HEK293 (cell line): ENCODE measurements at regions of chr20 and their contacts with region 1.

Region 1: DNA sequence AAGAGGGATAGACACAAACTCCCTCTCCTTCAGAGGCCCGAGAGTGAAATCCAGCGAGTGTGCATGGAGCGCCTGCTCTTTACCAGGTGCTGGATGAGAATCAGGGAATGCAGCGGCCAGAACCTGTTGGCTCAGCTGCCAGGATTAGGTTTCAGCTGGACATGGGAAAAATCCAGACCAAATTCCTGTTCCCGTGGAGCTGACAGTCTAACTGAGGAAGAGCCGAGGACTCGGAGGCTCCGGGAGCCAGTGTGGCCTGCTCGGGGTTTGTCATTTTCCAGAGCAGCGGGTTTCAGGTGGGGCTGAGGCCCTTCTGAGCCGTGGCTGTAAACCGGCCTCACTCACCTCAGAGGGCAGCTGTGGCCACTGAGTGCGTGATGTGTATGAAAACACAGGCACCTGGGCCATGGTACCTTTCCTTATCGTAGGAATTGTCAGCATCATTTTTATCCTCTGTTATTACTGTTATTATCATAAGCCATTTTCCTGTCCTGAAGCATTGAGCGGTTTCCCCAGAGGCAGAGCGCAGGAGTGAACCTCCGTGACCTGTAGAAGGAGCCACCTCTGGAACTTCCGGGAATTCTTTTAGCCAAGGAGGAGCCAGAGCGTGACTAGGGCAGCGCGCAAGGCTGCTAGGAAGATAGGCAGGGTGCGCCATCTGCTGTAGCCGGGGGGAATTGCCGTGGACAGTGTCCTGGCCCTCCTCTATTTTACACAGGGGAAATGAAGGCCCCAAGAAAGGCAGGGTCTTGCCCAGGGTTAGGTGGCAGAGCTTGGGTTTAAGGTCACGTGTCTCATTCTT is 27.3 kb downstream of the PKIG start:
- H3K4me3 ChIP-seq: no peak overlapping the region
- H3K27ac ChIP-seq: no peak overlapping the region
- H3K4me1 ChIP-seq: no peaks in the 10 kb centered on the region
- CTCF ChIP-seq: peak; percentile 97

Region 2: DNA sequence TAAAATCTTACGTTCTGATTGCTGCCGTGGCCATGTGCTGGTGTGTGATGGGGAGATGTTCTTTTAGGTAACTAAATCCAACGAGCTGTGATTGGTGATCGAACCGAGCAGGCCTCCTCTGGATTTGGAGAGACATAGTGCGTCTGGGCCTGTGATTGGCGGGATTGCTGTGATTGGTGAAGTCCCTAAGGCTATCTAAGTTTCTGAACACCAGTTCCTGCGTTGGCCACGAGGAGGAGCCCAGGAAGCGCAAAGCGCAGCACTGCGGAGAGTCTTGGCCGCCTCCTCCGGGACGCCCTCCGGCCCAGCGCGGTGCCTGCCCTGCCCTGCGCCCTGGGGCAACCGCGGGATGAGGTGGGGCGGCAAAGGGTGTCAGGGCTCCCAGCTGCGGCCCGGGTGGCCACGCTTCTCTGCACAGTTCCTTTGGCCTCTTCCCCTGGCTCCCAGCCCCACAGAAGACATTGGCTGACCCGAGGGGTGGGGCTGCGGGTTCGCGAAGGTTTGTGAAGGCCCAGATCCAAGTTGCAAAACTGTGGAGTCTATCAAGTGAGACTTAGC is 221.2 kb before region 1 on chr20:
- CTCF ChIA-PET with region 1: interaction called, 41 read pairs
- POLR2A ChIA-PET with region 1: interaction called, 3 read pairs
- H3K4me3 ChIP-seq: no peak overlapping the region
- H3K27ac ChIP-seq: no peak overlapping the region
- H3K4me1 ChIP-seq: no peaks in the 10 kb centered on the region
- CTCF ChIP-seq: peak; percentile 69; the same call in 1 of the 2 replicates

Region 3: GRCh38 chr20:44523746-44524145 is 86.0 kb before region 1 on chr20:
- CTCF ChIA-PET with region 1: interaction called, 15 read pairs
- POLR2A ChIA-PET with region 1: no interaction called
- H3K4me3 ChIP-seq: no peak overlapping the region
- H3K27ac ChIP-seq: no peak overlapping the region
- H3K4me1 ChIP-seq: peaks cover 14% of the 10 kb centered on the region
- CTCF ChIP-seq: no peak

Region 4: GRCh38 chr20:44598423-44599305 is 11.0 kb before region 1 on chr20:
- CTCF ChIA-PET with region 1: interaction called, 11 read pairs
- POLR2A ChIA-PET with region 1: no interaction called
- H3K4me3 ChIP-seq: no peak overlapping the region
- H3K27ac ChIP-seq: no peak overlapping the region
- H3K4me1 ChIP-seq: peaks cover 8% of the 10 kb centered on the region; the same call in 1 of the 2 replicates
- CTCF ChIP-seq: no peak

Region 5: DNA sequence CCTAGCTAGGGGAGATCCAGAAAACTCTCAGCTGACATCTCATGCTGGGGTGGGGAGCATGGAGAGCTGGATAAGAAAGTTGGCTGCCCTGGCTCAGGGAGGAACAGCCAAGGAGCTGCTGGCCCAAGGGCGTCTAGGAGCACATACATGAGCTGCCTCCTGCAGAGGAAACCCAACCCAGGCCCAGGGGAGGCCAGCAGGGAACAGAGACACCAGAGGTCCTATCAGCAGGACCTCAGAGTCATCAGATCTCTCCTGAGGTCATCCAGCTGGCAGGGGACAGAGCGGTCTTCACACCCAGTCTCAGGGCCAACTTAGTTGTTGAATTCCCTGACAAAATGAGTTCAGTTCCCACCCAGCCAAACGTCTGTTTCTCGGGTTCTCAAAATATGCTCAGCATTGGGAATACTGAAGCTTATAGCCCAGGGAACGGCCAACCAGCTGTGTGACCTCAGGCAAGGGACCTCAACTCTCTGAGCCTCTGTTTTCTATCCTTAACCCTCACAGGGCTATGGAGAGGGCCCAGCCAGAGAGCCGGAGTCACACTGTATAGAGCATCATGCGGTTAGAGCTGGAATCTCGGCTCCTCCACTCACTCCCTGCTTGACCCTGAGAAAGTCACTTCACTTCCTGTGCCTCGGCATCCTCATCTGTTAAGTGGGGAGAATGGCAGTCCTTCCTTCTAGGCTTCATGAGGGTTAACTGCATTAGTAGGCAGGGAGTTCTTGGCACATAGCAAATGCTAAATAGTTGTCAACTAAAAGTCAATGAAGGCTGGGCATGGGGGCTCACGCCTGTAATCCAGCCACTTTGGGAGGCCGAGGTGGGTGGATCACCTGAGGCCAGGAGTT is 28.0 kb after region 1 on chr20:
- CTCF ChIA-PET with region 1: no interaction called
- POLR2A ChIA-PET with region 1: no interaction called
- H3K4me3 ChIP-seq: no peak overlapping the region
- H3K27ac ChIP-seq: no peak overlapping the region
- H3K4me1 ChIP-seq: peaks cover 6% of the 10 kb centered on the region
- CTCF ChIP-seq: no peak

Region 6: DNA sequence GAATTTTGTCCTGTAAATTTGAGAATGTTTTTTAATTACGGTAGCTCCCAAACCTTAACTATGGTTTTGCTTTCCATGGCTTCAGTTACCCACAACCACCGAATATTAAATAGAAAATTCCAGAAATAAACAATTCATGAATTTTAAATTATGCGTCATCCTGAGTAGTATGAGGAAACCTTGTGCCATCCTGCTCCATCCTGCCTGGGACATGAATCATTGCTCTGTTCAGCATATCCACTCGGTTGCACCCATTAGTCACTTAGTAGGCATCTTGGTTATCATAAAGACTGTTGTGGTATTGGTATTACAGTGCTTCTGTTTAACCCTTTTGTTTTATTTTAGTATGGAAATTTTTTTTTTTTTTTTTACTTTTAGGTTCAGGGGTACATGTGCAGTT is 451.5 kb after region 1 on chr20:
- CTCF ChIA-PET with region 1: no interaction called
- POLR2A ChIA-PET with region 1: no interaction called
- H3K4me3 ChIP-seq: no peak overlapping the region
- H3K27ac ChIP-seq: no peak overlapping the region
- H3K4me1 ChIP-seq: no peaks in the 10 kb centered on the region
- CTCF ChIP-seq: no peak